GM12878 (cell line): ENCODE measurements at regions of chr9 and their contacts with region 1.

Region 1: DNA sequence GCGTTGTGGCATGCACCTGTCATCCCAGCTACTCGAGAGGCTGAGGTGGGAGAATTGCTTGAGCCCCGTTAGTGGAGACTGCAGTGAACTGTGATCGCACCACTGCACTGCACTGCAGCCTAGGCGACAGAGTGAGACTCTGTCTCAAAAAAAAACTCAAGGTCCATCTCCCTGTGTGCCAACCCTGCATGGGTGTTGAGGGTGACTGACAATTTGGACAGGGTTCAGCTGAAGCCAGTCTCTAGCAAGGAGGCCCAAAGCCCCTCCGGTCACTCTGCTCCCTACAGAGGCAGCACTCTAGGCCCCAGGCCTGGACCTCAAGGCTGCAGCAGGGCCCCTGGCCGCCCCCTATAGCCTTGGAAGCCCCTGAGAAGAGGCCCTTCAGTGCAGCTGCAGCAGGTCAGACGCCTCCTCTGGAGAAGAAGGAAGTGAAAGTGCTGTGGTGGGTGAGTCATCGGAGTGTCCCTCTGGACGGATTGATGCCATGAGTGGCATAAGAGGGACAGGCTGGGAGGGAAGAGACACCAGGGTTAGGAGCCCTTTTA is 39.2 kb upstream of the NEK6 start:
- DNase-seq: peak; percentile 92
- ATAC-seq: peak; percentile 76
- H3K4me3 ChIP-seq: no peak overlapping the region; the same call in 1 of the 2 replicates
- H3K27ac ChIP-seq: peak overlapping the region; percentile 98
- H3K4me1 ChIP-seq: peaks cover 54% of the 10 kb centered on the region
- H3K27me3 ChIP-seq: no peaks in the 10 kb centered on the region
- CTCF ChIP-seq: no peak
- EP300 ChIP-seq: peak; percentile 70 to 97; a peak in 3 of 4 replicates
- POLR2A ChIP-seq: peak; percentile 45
- RAD21 ChIP-seq: peak; percentile 41; the same call in 1 of the 2 replicates

Region 2: DNA sequence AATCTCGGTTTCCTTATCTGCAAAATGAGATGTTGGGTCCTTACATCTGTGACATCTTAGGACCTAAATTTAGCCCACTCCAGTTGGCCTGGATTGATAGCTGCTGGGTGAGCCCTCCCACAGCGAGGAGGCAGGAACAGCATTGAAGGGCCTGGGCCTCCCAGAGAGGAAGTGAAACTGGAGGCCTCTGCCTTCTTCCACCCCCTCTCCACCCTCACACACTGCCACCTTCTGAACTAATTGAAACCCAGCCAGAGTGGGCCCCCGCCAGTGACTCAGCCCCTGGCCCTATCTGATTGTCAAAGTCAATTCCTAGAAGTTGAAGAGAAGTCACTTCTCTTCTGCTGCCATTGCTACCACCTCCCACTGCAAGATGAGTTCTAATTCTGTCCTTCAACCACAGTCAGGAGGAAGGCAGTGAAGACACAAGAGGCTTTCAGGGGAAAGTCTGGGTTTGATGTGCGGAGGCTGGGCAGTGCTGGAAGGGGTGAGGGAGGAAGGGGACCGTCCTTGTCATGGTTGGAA is 16.0 kb before region 1 on chr9:
- CTCF ChIA-PET with region 1: interaction called, 78 read pairs
- POLR2A ChIA-PET with region 1: interaction called, 59 read pairs
- RAD21 ChIA-PET with region 1: interaction called, 293 read pairs
- SMC1A ChIA-PET with region 1: interaction called, 249 read pairs
- in situ Hi-C with region 1: no loop called
- intact Hi-C with region 1: loop called (anchors 1 kb)
- DNase-seq: peak; percentile 98
- ATAC-seq: peak; percentile 83
- H3K4me3 ChIP-seq: peak overlapping the region; percentile 37; the same call in 1 of the 2 replicates
- H3K27ac ChIP-seq: peak overlapping the region; percentile 99
- H3K4me1 ChIP-seq: peaks cover 77% of the 10 kb centered on the region
- H3K27me3 ChIP-seq: no peaks in the 10 kb centered on the region
- CTCF ChIP-seq: 0 out of 6 replicates have a peak, but pooled peaks of 1 of the 3 experiments have one; percentile 5
- EP300 ChIP-seq: peak; percentile 84 to 98; a peak in 3 of 4 replicates
- POLR2A ChIP-seq: peak; percentile 64; the same call in 1 of the 2 replicates
- RAD21 ChIP-seq: peak; percentile 49

Region 3: DNA sequence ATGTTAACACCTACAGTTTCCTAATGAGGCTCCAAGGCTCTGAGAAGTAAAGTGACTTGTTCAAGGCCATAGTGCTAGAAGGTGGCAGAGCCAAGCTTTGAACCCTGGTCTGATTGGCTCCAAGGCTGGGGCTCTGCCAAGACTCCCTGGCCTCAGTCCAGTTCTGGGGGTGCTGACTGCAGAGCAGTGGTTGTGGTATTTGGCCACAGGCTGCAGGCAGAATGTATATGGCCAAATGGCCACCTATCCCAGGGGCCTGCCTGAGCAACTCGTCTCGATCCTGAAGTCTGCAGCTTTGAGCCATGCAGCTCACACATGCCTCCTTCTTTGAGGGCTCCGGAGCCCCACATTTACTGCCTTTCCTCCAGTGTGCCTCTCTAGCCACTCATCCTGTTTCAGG is 29.6 kb after region 1 on chr9:
- CTCF ChIA-PET with region 1: interaction called, 5 read pairs
- POLR2A ChIA-PET with region 1: interaction called, 6 read pairs
- RAD21 ChIA-PET with region 1: interaction called, 4 read pairs
- SMC1A ChIA-PET with region 1: interaction called, 14 read pairs
- in situ Hi-C with region 1: no loop called
- intact Hi-C with region 1: no loop called
- DNase-seq: no peak
- ATAC-seq: peak; percentile 60
- H3K4me3 ChIP-seq: no peak overlapping the region
- H3K27ac ChIP-seq: no peak overlapping the region
- H3K4me1 ChIP-seq: peaks cover 17% of the 10 kb centered on the region
- H3K27me3 ChIP-seq: no peaks in the 10 kb centered on the region
- CTCF ChIP-seq: no peak
- EP300 ChIP-seq: no peak
- POLR2A ChIP-seq: no peak
- RAD21 ChIP-seq: no peak

Region 4: GRCh38 chr9:124267271-124267807 is 48.8 kb after region 1 on chr9:
- CTCF ChIA-PET with region 1: interaction called, 5 read pairs
- POLR2A ChIA-PET with region 1: interaction called, 22 read pairs
- RAD21 ChIA-PET with region 1: interaction called, 20 read pairs
- SMC1A ChIA-PET with region 1: interaction called, 34 read pairs
- in situ Hi-C with region 1: no loop called
- intact Hi-C with region 1: loop called (anchors 2 kb)
- DNase-seq: no peak
- ATAC-seq: peak; percentile 8
- H3K4me3 ChIP-seq: peak overlapping the region; percentile 61; the same call in 1 of the 2 replicates
- H3K27ac ChIP-seq: peak overlapping the region; percentile 7
- H3K4me1 ChIP-seq: peaks cover 44% of the 10 kb centered on the region
- H3K27me3 ChIP-seq: no peaks in the 10 kb centered on the region
- CTCF ChIP-seq: 0 out of 6 replicates have a peak, but pooled peaks of 1 of the 3 experiments have one; percentile 8
- EP300 ChIP-seq: no peak
- POLR2A ChIP-seq: peak; percentile 18
- RAD21 ChIP-seq: no peak

Region 5: DNA sequence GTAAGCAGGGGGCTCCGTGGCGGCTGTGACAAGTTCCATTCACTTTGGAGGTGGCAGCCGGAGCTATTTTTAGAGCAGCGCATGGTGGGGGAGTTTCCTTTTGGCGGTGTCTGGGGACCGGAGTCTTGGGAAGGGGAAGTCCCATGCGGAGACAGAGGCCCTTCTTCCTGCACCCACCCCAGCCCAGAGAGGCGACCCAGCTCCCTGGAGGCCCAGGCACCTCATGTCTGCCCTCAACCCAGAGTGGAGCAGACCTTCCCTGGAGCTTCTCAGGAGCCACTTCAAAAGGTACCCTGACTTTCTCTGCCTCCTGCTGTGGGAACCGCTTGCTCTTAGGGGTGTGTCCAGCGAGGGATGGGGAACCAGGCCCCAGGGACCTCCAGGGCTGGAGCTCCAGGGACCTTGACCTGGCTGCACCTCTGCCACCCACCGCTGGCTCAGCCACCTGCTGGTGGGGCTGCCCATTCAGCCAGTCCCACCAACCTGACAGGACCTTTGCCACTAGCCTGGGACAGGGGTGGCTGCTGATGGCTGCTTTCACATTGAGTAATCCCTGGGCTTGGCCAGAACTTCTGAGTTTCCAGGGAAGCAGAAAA is 73.4 kb after region 1 on chr9:
- CTCF ChIA-PET with region 1: interaction called, 24 read pairs
- POLR2A ChIA-PET with region 1: interaction called, 14 read pairs
- RAD21 ChIA-PET with region 1: interaction called, 38 read pairs
- SMC1A ChIA-PET with region 1: interaction called, 56 read pairs
- in situ Hi-C with region 1: no loop called
- intact Hi-C with region 1: loop called (anchors 1 kb)
- DNase-seq: peak; percentile 77
- ATAC-seq: peak; percentile 67
- H3K4me3 ChIP-seq: peak overlapping the region; percentile 56
- H3K27ac ChIP-seq: peak overlapping the region; percentile 91
- H3K4me1 ChIP-seq: peaks cover 90% of the 10 kb centered on the region
- H3K27me3 ChIP-seq: no peaks in the 10 kb centered on the region
- CTCF ChIP-seq: peak; percentile 18 to 41 (median 21); a peak in 3 of 6 replicates
- EP300 ChIP-seq: peak; percentile 45 to 68; a peak in 3 of 4 replicates
- POLR2A ChIP-seq: peak; percentile 45
- RAD21 ChIP-seq: no peak

Region 6: DNA sequence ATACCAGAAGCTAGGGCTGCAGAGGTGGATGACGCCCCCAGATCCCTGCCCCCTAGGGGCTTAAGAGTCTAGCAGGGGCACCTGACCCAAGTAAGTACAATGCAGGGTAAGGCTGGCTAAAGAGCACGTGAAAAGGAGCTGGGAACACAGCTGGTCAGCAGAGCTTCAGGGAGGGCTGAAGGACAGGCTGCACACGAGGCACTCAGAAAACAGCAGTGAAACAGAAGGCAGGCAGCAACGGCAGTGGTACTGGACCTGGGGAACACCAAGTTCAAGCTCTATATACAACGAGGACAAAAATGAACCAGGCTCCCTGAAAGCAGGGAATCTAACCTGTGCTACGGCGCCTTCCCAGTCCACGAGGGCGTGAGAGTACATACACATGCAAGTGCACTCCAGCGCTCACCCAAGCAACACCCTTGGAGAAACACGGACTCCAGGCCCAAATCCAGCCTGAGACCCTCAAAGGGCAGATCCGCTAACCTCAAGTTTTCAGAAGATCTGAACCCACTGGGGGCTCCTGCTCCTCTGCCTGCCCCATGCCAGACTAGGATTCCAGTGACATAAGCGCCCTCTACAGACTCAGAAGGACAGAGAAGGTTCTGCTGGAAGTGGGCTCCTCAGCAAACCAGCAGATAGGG is 139.3 kb after region 1 on chr9:
- CTCF ChIA-PET with region 1: no interaction called
- POLR2A ChIA-PET with region 1: no interaction called
- RAD21 ChIA-PET with region 1: no interaction called
- SMC1A ChIA-PET with region 1: no interaction called
- in situ Hi-C with region 1: no loop called
- intact Hi-C with region 1: no loop called
- DNase-seq: no peak
- ATAC-seq: peak; percentile 20
- H3K4me3 ChIP-seq: no peak overlapping the region
- H3K27ac ChIP-seq: no peak overlapping the region
- H3K4me1 ChIP-seq: no peaks in the 10 kb centered on the region
- H3K27me3 ChIP-seq: no peaks in the 10 kb centered on the region
- CTCF ChIP-seq: peak in 2 of 3 experiments; percentile 22 to 30; a peak in 3 of 6 replicates
- EP300 ChIP-seq: no peak
- POLR2A ChIP-seq: peak; percentile 68; the same call in 1 of the 2 replicates
- RAD21 ChIP-seq: peak; percentile 33; the same call in 1 of the 2 replicates